Activated B cell treated with CpG ODN at 0.5 μM for 24 hours (primary cell): ENCODE measurements at regions of chr4 and their contacts with region 1.

Region 1: GRCh38 chr4:123776254-123776653 is 379.7 kb downstream of the SPRY1 start:
- DNase-seq: no peak
- ATAC-seq: peak; percentile 73
- H3K4me3 Mint-ChIP-seq: no peak overlapping the region
- H3K27ac Mint-ChIP-seq: peak overlapping the region; percentile 14
- H3K4me1 Mint-ChIP-seq: peaks cover 7% of the 10 kb centered on the region
- H3K27me3 Mint-ChIP-seq: peaks cover 6% of the 10 kb centered on the region
- CTCF ChIP-seq: no peak

Region 2: DNA sequence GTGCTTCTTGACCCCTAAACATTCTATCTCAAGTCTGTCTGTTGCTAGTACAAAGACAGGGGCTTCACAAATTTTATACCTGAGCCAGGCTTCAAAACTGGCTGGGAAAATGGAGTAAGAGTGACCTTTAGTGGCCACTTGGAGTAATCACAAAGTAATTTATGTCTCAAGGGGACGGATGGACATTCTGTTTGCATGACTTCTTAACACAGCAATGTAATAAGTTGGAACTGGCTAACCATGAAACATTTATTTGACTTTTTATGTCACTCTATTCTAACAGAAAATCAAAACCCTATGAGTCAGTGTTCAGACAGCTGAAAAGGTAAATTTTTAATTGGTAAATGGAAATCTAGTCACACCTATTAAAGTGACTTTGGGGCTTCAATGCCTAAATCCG is 335.7 kb after region 1 on chr4:
- CTCF ChIA-PET with region 1: no interaction called
- POLR2A ChIA-PET with region 1: no interaction called
- intact Hi-C with region 1: loop called (anchors 2 kb)
- DNase-seq: no peak
- ATAC-seq: no peak
- H3K4me3 Mint-ChIP-seq: no peak overlapping the region
- H3K27ac Mint-ChIP-seq: no peak overlapping the region
- H3K4me1 Mint-ChIP-seq: no peaks in the 10 kb centered on the region
- H3K27me3 Mint-ChIP-seq: no peaks in the 10 kb centered on the region
- CTCF ChIP-seq: no peak

Region 3: GRCh38 chr4:124262211-124263179 is 486.2 kb after region 1 on chr4:
- CTCF ChIA-PET with region 1: interaction called, 4 read pairs
- POLR2A ChIA-PET with region 1: no interaction called
- intact Hi-C with region 1: loop called (anchors 1 kb)
- DNase-seq: no peak
- ATAC-seq: peak; percentile 56
- H3K4me3 Mint-ChIP-seq: no peak overlapping the region
- H3K27ac Mint-ChIP-seq: no peak overlapping the region
- H3K4me1 Mint-ChIP-seq: no peaks in the 10 kb centered on the region
- H3K27me3 Mint-ChIP-seq: no peaks in the 10 kb centered on the region
- CTCF ChIP-seq: no peak